ENCODE measurements at regions of chr2 and their contacts with region 1.

Region 1: DNA sequence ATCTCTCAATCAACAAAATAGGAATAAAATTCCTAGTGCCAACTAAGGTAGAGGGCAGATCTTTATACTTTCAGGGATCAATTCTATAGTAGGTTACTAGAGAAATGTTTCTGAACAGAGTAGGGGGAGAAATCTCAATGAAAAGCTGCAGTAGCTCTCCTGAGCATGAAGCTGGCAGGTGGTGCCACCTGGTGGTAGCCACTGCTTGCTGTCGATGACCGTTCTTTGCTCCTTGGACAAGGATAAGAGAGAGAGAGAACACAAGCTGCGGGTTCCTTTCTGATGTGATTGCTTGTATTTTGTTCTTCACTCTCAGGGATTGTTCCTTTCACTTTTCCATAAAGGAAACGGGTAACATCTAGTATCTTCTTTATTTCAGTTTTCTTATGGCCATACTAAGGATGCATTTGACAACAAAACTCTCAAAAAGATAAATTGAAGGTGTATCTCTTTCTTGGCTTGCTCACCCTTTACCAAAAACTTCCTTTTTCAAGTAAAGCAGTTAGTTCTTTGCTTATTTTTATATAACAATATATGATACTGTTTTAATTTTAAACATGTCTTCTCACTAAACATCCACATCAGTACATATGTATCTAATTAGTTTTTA is 18.6 kb upstream of the MRPL19 start:
- DNase-seq: no peak
- H3K4me3 ChIP-seq: no peak overlapping the region
- CTCF ChIP-seq: peak; percentile 91

Region 2: GRCh38 chr2:75480971-75481836 is 146.8 kb before region 1 on chr2:
- CTCF ChIA-PET with region 1: interaction called, 12 read pairs
- POLR2A ChIA-PET with region 1: no interaction called
- DNase-seq: no peak
- H3K4me3 ChIP-seq: no peak overlapping the region
- CTCF ChIP-seq: peak; percentile 35

Region 3: GRCh38 chr2:75667884-75668283 is 39.9 kb after region 1 on chr2:
- CTCF ChIA-PET with region 1: no interaction called
- POLR2A ChIA-PET with region 1: no interaction called
- DNase-seq: no peak
- H3K4me3 ChIP-seq: no peak overlapping the region
- CTCF ChIP-seq: no peak

Measured in AG04449 (cell line).